Activated CD4-positive, alpha-beta T cell treated with anti-CD3 and anti-CD28 coated beads for 36 hours (primary cell): ENCODE measurements at regions of chr5 and their contacts with region 1.

Region 1: GRCh38 chr5:157271740-157272271 is 5.9 kb downstream of the CYFIP2 start:
- DNase-seq: peak; percentile 95
- ATAC-seq: peak; percentile 82
- H3K4me3 Mint-ChIP-seq: peak overlapping the region; percentile 96
- H3K27ac Mint-ChIP-seq: peak overlapping the region; percentile 97
- H3K4me1 Mint-ChIP-seq: peaks cover 84% of the 10 kb centered on the region
- H3K27me3 Mint-ChIP-seq: no peaks in the 10 kb centered on the region

Region 2: DNA sequence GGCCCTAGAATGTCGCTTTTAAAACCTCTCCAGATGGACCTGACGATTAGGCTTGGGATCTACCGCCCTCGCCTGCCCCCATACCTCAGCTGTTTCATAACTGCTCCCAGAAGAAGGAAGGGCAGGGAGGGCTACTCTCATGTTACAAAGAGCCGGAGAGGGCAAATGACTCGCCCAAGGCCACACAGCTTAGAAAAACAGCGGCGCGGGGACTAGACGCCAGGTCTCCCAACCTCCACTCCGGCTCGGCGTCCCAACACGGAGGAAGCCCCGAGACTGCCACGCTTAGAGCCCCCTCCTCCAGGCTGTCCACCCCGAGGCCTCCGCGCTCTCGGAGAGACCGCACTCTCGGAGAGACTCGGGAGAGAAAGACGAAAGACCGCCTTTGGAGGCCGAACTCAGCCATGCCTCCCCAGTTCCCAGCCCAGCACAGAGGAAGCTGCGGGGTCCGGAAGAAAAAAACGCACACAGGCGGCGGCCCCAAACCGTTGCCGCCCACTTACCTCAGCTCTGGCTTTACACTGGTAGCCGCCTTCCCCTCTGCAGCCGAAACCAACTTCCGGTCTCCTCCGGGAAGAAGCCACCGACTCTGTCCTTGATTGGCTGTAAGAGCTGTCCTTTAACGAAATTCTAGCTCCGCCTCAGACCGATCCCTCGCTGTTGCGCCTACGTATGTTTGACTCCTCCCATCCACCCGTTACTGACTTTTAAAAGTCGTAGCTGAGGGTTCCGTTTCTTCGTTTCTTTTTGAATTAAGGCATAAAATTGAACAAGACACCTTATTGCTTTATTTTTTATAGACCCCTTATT is 129.3 kb before region 1 on chr5 and contains the start of gene MED7:
- CTCF ChIA-PET with region 1: interaction called, 6 read pairs
- POLR2A ChIA-PET with region 1: interaction called, 27 read pairs
- intact Hi-C with region 1: loop called in 1 of 2 experiments (anchors 2 kb)
- DNase-seq: peak; percentile 95
- ATAC-seq: peak; percentile 98
- H3K4me3 Mint-ChIP-seq: peak within 1 kb of the TSS; percentile 84
- H3K27ac Mint-ChIP-seq: peak within 1 kb of the TSS; percentile 99
- H3K4me1 Mint-ChIP-seq: peaks cover 46% of the 10 kb centered on the region
- H3K27me3 Mint-ChIP-seq: no peaks in the 10 kb centered on the region
- total RNA-seq, gene MED7: 10.0 to 16.9 TPM

Region 3: DNA sequence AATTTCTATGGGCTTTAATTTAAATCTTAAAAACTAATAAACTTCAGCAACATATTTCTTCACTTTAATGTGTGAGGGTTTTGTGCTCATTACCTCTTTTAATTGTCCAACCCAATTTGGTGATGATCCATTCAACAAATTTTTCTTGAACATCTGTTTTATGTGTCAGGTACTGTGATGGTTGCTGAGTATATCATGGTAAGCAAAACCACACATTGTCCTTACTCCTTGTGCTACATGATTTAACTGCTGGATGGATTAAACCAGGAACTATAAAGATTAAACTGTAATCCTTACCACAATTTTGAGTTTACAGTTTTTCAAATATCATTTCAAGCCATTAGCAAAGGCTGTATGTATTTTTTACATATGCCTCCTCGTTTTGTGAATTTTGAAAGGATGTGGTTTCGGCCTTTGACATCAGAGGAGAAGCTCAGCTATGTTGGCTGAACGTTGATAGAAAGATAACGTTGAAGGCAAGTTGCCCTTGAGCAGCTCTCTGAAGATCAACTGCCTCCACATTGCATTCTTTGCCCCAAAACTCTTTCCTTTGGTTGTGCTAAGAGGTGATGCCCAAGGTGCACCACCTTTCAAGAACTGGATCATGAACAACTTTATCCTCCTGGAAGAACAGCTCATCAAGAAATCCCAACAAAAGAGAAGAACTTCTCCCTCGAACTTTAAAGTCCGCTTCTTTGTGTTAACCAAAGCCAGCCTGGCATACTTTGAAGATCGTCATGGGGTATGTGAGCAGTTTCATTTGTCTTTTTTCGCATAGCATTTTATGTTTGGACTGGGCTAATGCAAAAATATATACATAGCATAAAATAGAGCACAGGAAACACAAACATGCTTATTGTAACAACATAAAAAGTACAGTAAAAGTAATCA is 91.2 kb before region 1 on chr5 and contains the start of gene ITK:
- CTCF ChIA-PET with region 1: interaction called, 6 read pairs
- POLR2A ChIA-PET with region 1: interaction called, 7 read pairs
- intact Hi-C with region 1: loop called (anchors 2 kb)
- DNase-seq: peak; percentile 52
- ATAC-seq: peak; percentile 45
- H3K4me3 Mint-ChIP-seq: peak within 1 kb of the TSS; percentile 93
- H3K27ac Mint-ChIP-seq: peak within 1 kb of the TSS; percentile 100
- H3K4me1 Mint-ChIP-seq: peaks cover 43% of the 10 kb centered on the region
- H3K27me3 Mint-ChIP-seq: no peaks in the 10 kb centered on the region
- total RNA-seq, gene ITK: 208 to 249 TPM

Region 4: GRCh38 chr5:157225469-157226422 is 46.1 kb before region 1 on chr5:
- CTCF ChIA-PET with region 1: interaction called, 10 read pairs
- POLR2A ChIA-PET with region 1: interaction called, 5 read pairs
- intact Hi-C with region 1: loop called (anchors 2 to 5 kb)
- DNase-seq: no peak
- ATAC-seq: peak; percentile 30
- H3K4me3 Mint-ChIP-seq: peak overlapping the region; percentile 77
- H3K27ac Mint-ChIP-seq: peak overlapping the region; percentile 96
- H3K4me1 Mint-ChIP-seq: peaks cover 73% of the 10 kb centered on the region
- H3K27me3 Mint-ChIP-seq: no peaks in the 10 kb centered on the region

Region 5: GRCh38 chr5:157283434-157283833 is 11.6 kb after region 1 on chr5:
- CTCF ChIA-PET with region 1: interaction called, 13 read pairs
- POLR2A ChIA-PET with region 1: interaction called, 5 read pairs
- intact Hi-C with region 1: loop called (anchors 1 to 2 kb)
- DNase-seq: no peak
- ATAC-seq: peak; percentile 47
- H3K4me3 Mint-ChIP-seq: no peak overlapping the region
- H3K27ac Mint-ChIP-seq: peak overlapping the region; percentile 84
- H3K4me1 Mint-ChIP-seq: peaks cover 83% of the 10 kb centered on the region
- H3K27me3 Mint-ChIP-seq: no peaks in the 10 kb centered on the region

Region 6: GRCh38 chr5:157303667-157304327 is 32.0 kb after region 1 on chr5:
- CTCF ChIA-PET with region 1: interaction called, 19 read pairs
- POLR2A ChIA-PET with region 1: interaction called, 9 read pairs
- intact Hi-C with region 1: loop called in 1 of 2 experiments (anchors 5 kb)
- DNase-seq: peak; percentile 76
- ATAC-seq: peak; percentile 68
- H3K4me3 Mint-ChIP-seq: no peak overlapping the region
- H3K27ac Mint-ChIP-seq: peak overlapping the region; percentile 64
- H3K4me1 Mint-ChIP-seq: peaks cover 75% of the 10 kb centered on the region
- H3K27me3 Mint-ChIP-seq: no peaks in the 10 kb centered on the region

Region 7: DNA sequence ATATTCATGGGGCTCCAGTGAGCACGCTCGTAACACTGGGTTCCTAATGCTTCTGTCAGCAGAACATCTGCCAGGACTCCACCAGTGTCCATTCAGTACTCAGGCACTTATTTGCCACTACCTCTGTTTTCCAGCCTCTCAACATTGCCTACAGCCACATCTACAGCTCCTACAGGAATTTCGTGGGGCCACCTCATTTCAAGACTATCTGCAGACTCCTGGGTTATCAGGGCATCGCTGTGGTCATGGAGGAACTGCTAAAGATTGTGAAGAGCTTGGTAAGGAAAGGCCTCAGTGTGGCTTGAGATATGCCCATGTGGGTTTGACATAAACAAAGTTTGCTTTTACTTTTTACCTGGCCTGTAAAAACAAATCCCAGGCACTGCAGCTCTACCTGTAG is 87.1 kb after region 1 on chr5:
- CTCF ChIA-PET with region 1: no interaction called
- POLR2A ChIA-PET with region 1: no interaction called
- intact Hi-C with region 1: no loop called
- DNase-seq: no peak
- ATAC-seq: no peak
- H3K4me3 Mint-ChIP-seq: no peak overlapping the region
- H3K27ac Mint-ChIP-seq: peak overlapping the region; percentile 37
- H3K4me1 Mint-ChIP-seq: peaks cover 19% of the 10 kb centered on the region
- H3K27me3 Mint-ChIP-seq: no peaks in the 10 kb centered on the region

Region 8: DNA sequence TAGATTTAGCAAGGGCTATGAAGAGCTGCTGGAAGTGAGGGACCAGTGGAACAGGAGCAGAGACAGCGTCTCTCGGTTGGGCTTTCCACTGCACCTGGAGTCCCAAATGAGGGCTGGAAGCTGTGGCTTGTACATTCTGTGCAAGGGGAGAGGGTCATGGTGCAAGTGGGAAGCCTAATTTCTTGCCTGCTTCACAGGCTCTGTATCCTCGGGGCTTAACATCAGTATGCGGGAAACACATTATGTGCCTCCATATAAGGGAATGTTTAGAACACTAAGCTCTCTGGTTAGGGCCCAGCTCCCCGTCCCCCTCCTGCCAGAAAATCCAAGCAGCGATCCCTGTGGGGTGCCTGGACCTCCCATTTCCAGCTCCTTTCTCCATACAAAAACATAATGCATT is 99.2 kb after region 1 on chr5:
- CTCF ChIA-PET with region 1: no interaction called
- POLR2A ChIA-PET with region 1: no interaction called
- intact Hi-C with region 1: no loop called
- DNase-seq: no peak
- ATAC-seq: no peak
- H3K4me3 Mint-ChIP-seq: no peak overlapping the region
- H3K27ac Mint-ChIP-seq: peak overlapping the region; percentile 71
- H3K4me1 Mint-ChIP-seq: peaks cover 16% of the 10 kb centered on the region
- H3K27me3 Mint-ChIP-seq: no peaks in the 10 kb centered on the region

Region 9: GRCh38 chr5:157464519-157465171 is 192.8 kb after region 1 on chr5:
- CTCF ChIA-PET with region 1: no interaction called
- POLR2A ChIA-PET with region 1: no interaction called
- intact Hi-C with region 1: no loop called
- DNase-seq: peak; percentile 87
- ATAC-seq: peak; percentile 92
- H3K4me3 Mint-ChIP-seq: peak overlapping the region; percentile 34
- H3K27ac Mint-ChIP-seq: peak overlapping the region; percentile 84
- H3K4me1 Mint-ChIP-seq: peaks cover 36% of the 10 kb centered on the region
- H3K27me3 Mint-ChIP-seq: peaks cover 18% of the 10 kb centered on the region

Region 10: DNA sequence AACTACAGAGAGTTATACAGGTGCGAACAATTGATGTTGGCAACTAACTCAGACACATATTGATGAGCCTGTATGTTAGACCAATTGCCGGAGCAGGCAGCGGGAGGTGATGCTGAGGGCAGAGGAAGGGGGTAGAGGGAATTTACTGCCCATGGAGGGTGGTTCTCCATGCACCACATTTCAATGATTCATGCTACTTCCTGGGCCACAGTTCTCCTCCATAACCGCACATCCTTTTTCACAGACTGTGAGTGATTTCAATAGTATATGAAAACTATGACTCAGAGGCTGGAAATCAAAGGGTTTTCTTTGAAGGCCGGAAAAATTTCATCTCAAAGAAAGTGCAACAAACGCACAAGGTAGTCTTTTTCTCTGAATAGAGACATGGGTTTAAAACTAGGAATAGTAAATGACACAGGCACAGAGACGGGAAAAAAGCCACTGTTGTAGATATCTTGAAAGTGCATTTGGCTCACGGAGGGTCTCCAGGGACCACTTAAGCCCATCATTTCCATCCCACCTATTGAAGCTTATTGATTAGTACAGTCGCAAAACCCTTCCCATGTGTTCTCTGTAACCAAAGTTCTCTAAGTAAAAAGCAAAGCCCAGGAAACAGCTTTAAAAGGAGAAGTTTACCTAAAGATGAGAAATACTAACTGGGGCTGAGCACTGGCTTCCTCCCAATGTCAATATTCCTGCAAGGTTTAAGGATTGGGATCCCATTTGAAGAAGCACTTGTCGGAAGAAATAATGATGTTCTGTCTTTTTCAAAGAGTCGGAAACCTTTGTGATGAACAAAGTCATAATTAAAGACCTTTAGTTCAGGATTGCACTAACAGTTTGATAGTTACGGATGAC is 331.8 kb after region 1 on chr5:
- CTCF ChIA-PET with region 1: no interaction called
- POLR2A ChIA-PET with region 1: no interaction called
- intact Hi-C with region 1: loop called in 1 of 2 experiments (anchors 5 kb)
- DNase-seq: peak; percentile 78
- ATAC-seq: peak; percentile 44
- H3K4me3 Mint-ChIP-seq: peak overlapping the region; percentile 49
- H3K27ac Mint-ChIP-seq: peak overlapping the region; percentile 79
- H3K4me1 Mint-ChIP-seq: peaks cover 88% of the 10 kb centered on the region
- H3K27me3 Mint-ChIP-seq: no peaks in the 10 kb centered on the region